ENCODE measurements at regions of chr11 and their contacts with region 1.

Region 1: GRCh38 chr11:96207459-96208449 is 135.2 kb downstream of the MAML2 start:
- DNase-seq: peak; percentile 46
- ATAC-seq: peak; percentile 18
- H3K4me3 Mint-ChIP-seq: peak overlapping the region; percentile 47
- H3K27ac Mint-ChIP-seq: peak overlapping the region; percentile 89
- H3K4me1 Mint-ChIP-seq: peaks cover 87% of the 10 kb centered on the region
- H3K27me3 Mint-ChIP-seq: no peaks in the 10 kb centered on the region
- CTCF ChIP-seq: no peak

Region 2: GRCh38 chr11:96062134-96062533 is 145.6 kb before region 1 on chr11:
- CTCF ChIA-PET with region 1: no interaction called
- POLR2A ChIA-PET with region 1: no interaction called
- intact Hi-C with region 1: loop called (anchors 5 kb)
- DNase-seq: peak; percentile 67
- ATAC-seq: peak; percentile 89
- H3K4me3 Mint-ChIP-seq: peak overlapping the region; percentile 1
- H3K27ac Mint-ChIP-seq: peak overlapping the region; percentile 85
- H3K4me1 Mint-ChIP-seq: peaks cover 72% of the 10 kb centered on the region
- H3K27me3 Mint-ChIP-seq: no peaks in the 10 kb centered on the region
- CTCF ChIP-seq: no peak

Region 3: DNA sequence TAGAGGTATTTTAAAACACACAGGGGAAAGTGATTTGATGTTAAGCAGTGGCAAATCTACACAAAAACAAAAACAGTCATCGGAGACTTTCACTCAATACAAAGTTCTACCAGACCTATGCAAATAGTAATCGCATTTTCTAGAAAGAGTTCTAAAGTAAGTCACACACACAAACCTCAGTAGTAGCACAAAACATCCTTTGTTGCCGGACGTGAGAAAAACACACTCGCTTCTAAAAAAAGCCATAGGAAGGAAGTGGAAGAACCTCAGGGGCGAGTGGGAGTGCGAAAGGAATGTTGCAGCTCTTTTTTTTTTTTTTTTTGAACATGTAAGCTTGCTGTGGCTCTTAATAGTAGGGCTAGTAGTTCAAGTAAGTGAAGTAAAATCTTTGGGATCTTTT is 46.3 kb after region 1 on chr11:
- CTCF ChIA-PET with region 1: no interaction called
- POLR2A ChIA-PET with region 1: interaction called, 3 read pairs
- intact Hi-C with region 1: loop called (anchors 5 kb)
- DNase-seq: peak; percentile 33
- ATAC-seq: no peak
- H3K4me3 Mint-ChIP-seq: peak overlapping the region; percentile 65
- H3K27ac Mint-ChIP-seq: peak overlapping the region; percentile 90
- H3K4me1 Mint-ChIP-seq: peaks cover 84% of the 10 kb centered on the region
- H3K27me3 Mint-ChIP-seq: no peaks in the 10 kb centered on the region
- CTCF ChIP-seq: no peak

Measured in activated CD8-positive, alpha-beta T cell treated with anti-CD3 and anti-CD28 coated beads for 36 hours (primary cell).